Activated CD4-positive, alpha-beta T cell treated with anti-CD3 and anti-CD28 coated beads for 36 hours (primary cell): ENCODE measurements at regions of chr2 and their contacts with region 1.

Region 1: DNA sequence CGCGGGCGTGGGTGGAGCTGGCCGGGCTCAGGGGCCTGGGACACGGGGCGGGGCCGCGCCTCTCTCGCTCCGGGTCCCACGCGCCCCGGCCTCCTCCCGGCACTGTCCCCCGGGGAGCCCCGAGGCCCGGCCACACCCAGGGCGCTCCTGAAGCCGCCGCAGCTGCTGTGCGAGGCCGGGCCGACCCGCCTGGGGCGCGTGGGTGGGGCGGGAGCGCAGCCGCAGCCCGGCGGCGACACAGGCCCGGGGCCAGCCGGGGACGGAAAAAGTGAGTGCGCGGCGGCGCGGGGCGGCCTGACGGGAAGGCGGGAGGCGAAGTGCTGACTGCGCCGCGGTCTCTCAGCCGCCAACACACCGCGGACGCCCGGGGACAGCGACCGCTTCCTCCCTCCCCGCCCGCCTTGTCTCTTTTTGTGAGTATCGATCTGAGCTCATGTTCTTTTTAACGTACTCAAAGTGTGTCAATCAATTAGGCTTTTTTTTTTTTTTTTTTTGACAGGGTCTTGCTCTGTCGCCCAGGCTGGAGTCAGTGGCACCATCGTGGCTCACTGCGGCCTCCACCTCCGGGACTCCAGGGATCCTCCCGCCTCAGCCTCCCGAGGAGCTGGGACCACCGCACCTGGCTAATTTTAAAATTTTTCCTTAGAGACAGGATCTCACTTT is 14.5 kb downstream of the PDCD1 start:
- DNase-seq: peak; percentile 95
- ATAC-seq: peak; percentile 82
- H3K4me3 Mint-ChIP-seq: peak overlapping the region; percentile 67
- H3K27ac Mint-ChIP-seq: peak overlapping the region; percentile 85
- H3K4me1 Mint-ChIP-seq: peaks cover 36% of the 10 kb centered on the region
- H3K27me3 Mint-ChIP-seq: no peaks in the 10 kb centered on the region

Region 2: GRCh38 chr2:241686649-241687425 is 157.4 kb before region 1 on chr2 and contains the start of gene DTYMK:
- CTCF ChIA-PET with region 1: interaction called, 4 read pairs
- POLR2A ChIA-PET with region 1: no interaction called
- intact Hi-C with region 1: loop called in 1 of 2 experiments (anchors 1 kb)
- DNase-seq: peak; percentile 98
- ATAC-seq: peak; percentile 96
- H3K4me3 Mint-ChIP-seq: peak within 1 kb of the TSS; percentile 98
- H3K27ac Mint-ChIP-seq: peak within 1 kb of the TSS; percentile 96
- H3K4me1 Mint-ChIP-seq: peaks cover 32% of the 10 kb centered on the region
- H3K27me3 Mint-ChIP-seq: no peaks in the 10 kb centered on the region
- total RNA-seq, gene DTYMK: 79.8 to 93.1 TPM

Region 3: GRCh38 chr2:241762933-241763369 is 81.2 kb before region 1 on chr2:
- CTCF ChIA-PET with region 1: no interaction called
- POLR2A ChIA-PET with region 1: interaction called, 4 read pairs
- intact Hi-C with region 1: loop called in 1 of 2 experiments (anchors 5 kb)
- DNase-seq: peak; percentile 65
- ATAC-seq: peak; percentile 76
- H3K4me3 Mint-ChIP-seq: no peak overlapping the region
- H3K27ac Mint-ChIP-seq: peak overlapping the region; percentile 76
- H3K4me1 Mint-ChIP-seq: peaks cover 17% of the 10 kb centered on the region
- H3K27me3 Mint-ChIP-seq: no peaks in the 10 kb centered on the region

Region 4: GRCh38 chr2:241798081-241798630 is 46.0 kb before region 1 on chr2:
- CTCF ChIA-PET with region 1: no interaction called
- POLR2A ChIA-PET with region 1: no interaction called
- intact Hi-C with region 1: no loop called
- DNase-seq: peak; percentile 9
- ATAC-seq: peak; percentile 14
- H3K4me3 Mint-ChIP-seq: no peak overlapping the region
- H3K27ac Mint-ChIP-seq: no peak overlapping the region
- H3K4me1 Mint-ChIP-seq: no peaks in the 10 kb centered on the region
- H3K27me3 Mint-ChIP-seq: no peaks in the 10 kb centered on the region

Region 5: DNA sequence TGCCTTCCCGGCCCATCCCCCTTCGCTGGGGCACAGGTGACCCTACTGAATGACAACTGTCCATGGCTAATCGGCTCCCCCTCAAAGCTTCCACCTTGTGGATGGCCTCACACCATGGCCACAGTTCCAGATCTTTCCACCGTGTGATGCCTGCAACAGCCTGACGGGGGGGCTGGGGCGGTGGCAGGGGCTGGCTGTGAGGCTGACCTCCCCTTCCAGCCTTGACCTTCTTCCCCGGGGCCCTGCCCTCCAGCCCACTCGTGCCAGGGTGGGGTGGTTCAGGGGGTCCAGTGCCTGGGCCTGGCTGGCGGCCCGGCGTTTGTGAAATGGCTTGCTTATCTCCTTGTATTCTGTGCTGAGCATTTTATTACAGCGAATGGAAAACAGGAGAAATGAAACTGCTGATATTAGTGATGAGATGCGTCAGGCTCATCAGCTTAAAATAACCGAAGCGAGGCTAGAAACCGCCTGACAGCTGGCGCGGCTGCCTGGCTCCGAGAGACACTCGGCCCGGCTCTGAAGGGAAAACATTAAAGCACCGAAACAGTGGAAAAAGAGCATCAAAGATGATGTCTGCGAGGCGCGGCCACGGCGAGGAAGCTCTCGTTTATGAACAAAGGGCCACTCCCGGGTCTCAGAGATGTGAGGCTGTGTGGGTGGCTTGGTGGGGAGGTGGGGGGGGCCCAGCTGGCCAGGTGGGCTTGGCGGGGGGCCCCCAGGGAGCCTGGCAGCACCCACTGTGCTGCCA is 15.4 kb after region 1 on chr2:
- CTCF ChIA-PET with region 1: interaction called, 3 read pairs
- POLR2A ChIA-PET with region 1: interaction called, 3 read pairs
- intact Hi-C with region 1: loop called (anchors 1 kb)
- DNase-seq: peak; percentile 88
- ATAC-seq: peak; percentile 47
- H3K4me3 Mint-ChIP-seq: peak overlapping the region; percentile 85
- H3K27ac Mint-ChIP-seq: peak overlapping the region; percentile 95
- H3K4me1 Mint-ChIP-seq: peaks cover 63% of the 10 kb centered on the region
- H3K27me3 Mint-ChIP-seq: peaks cover 11% of the 10 kb centered on the region

Region 6: DNA sequence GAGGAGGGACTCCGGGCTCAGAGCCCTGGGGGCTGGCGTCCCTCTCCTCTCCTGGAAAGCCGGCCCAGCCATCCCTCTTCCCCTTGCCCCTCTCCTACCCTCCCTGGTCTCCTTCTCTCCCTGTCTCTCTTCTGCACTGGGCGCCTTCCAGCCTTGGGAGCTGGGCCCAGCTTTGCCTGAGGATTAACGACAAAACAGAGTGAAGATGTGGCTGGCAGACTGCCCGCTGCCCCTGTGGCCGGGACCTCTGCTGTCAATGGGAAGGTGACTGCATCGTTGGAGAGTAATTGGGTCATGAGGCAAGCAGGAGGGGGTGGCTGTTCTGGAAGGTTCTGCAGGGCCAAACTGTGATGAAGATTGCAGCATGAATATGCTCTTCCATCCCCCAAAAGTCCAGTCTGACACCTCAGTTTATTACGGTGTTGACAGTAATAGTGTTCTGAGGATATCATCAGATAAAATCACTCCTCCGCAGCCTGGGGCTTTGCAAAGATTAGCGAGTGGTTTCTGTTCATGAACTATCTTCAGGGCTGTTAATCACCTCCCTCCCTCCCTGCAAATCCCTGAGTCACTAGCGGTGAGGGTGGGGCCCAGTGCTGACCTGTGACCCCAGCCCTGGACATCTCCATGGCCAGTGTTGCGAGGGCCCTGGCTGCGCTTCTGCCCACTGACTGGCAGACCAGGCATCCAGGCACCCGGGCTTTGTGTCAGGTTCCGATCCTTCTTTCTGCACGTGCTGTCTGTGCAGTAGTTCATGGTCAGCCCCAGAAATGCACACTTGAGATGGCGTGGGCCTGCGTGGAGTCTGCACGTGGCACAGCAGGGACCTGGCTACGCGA is 48.3 kb after region 1 on chr2:
- CTCF ChIA-PET with region 1: no interaction called
- POLR2A ChIA-PET with region 1: no interaction called
- intact Hi-C with region 1: no loop called
- DNase-seq: no peak
- ATAC-seq: no peak
- H3K4me3 Mint-ChIP-seq: no peak overlapping the region
- H3K27ac Mint-ChIP-seq: no peak overlapping the region
- H3K4me1 Mint-ChIP-seq: peaks cover 9% of the 10 kb centered on the region
- H3K27me3 Mint-ChIP-seq: no peaks in the 10 kb centered on the region